T-cell (primary cell): ENCODE measurements at regions of chr15 and their contacts with region 1.

Region 1: GRCh38 chr15:82074608-82075007 is 28.8 kb upstream of the MEX3B start:
- DNase-seq: no peak
- ATAC-seq: no peak
- H3K4me3 ChIP-seq: no peak overlapping the region
- H3K4me3 Mint-ChIP-seq: no peak overlapping the region
- H3K27ac ChIP-seq: no peak overlapping the region
- H3K27ac Mint-ChIP-seq: no peak overlapping the region
- H3K4me1 ChIP-seq: no peaks in the 10 kb centered on the region
- H3K4me1 Mint-ChIP-seq: no peaks in the 10 kb centered on the region
- H3K27me3 ChIP-seq: peaks cover 0 to 30% of the 10 kb centered on the region in 2 experiments
- H3K27me3 Mint-ChIP-seq: peaks cover 17 to 23% of the 10 kb centered on the region in 2 donors

Region 2: GRCh38 chr15:81562986-81563385 is 511.6 kb before region 1 on chr15:
- CTCF ChIA-PET with region 1: no interaction called
- POLR2A ChIA-PET with region 1: no interaction called
- DNase-seq: no peak
- ATAC-seq: no peak
- H3K4me3 ChIP-seq: no peak overlapping the region
- H3K4me3 Mint-ChIP-seq: no peak overlapping the region
- H3K27ac ChIP-seq: no peak overlapping the region
- H3K27ac Mint-ChIP-seq: no peak overlapping the region
- H3K4me1 ChIP-seq: no peaks in the 10 kb centered on the region
- H3K4me1 Mint-ChIP-seq: no peaks in the 10 kb centered on the region
- H3K27me3 ChIP-seq: no peaks in the 10 kb centered on the region
- H3K27me3 Mint-ChIP-seq: peaks cover under 1 to 5% of the 10 kb centered on the region in 2 donors

Region 3: GRCh38 chr15:81843226-81843625 is 231.4 kb before region 1 on chr15:
- CTCF ChIA-PET with region 1: no interaction called
- POLR2A ChIA-PET with region 1: no interaction called
- DNase-seq: no peak
- ATAC-seq: no peak
- H3K4me3 ChIP-seq: no peak overlapping the region
- H3K4me3 Mint-ChIP-seq: no peak overlapping the region
- H3K27ac ChIP-seq: no peak overlapping the region
- H3K27ac Mint-ChIP-seq: no peak overlapping the region
- H3K4me1 ChIP-seq: no peaks in the 10 kb centered on the region
- H3K4me1 Mint-ChIP-seq: no peaks in the 10 kb centered on the region
- H3K27me3 ChIP-seq: no peaks in the 10 kb centered on the region
- H3K27me3 Mint-ChIP-seq: peaks cover 0 to 4% of the 10 kb centered on the region in 2 donors

Region 4: GRCh38 chr15:82122746-82123400 is 48.3 kb after region 1 on chr15:
- CTCF ChIA-PET with region 1: no interaction called
- POLR2A ChIA-PET with region 1: no interaction called
- DNase-seq: no peak
- ATAC-seq: no peak
- H3K4me3 ChIP-seq: no peak overlapping the region
- H3K4me3 Mint-ChIP-seq: no peak overlapping the region
- H3K27ac ChIP-seq: no peak overlapping the region
- H3K27ac Mint-ChIP-seq: no peak overlapping the region
- H3K4me1 ChIP-seq: no peaks in the 10 kb centered on the region
- H3K4me1 Mint-ChIP-seq: peaks cover 0 to 8% (median 0%) of the 10 kb centered on the region in 3 donors
- H3K27me3 ChIP-seq: no peaks in the 10 kb centered on the region
- H3K27me3 Mint-ChIP-seq: no peaks in the 10 kb centered on the region

Region 5: GRCh38 chr15:82146990-82147461 is 72.4 kb after region 1 on chr15:
- CTCF ChIA-PET with region 1: no interaction called
- POLR2A ChIA-PET with region 1: no interaction called
- DNase-seq: no peak
- ATAC-seq: no peak
- H3K4me3 ChIP-seq: no peak overlapping the region
- H3K4me3 Mint-ChIP-seq: no peak overlapping the region
- H3K27ac ChIP-seq: no peak overlapping the region
- H3K27ac Mint-ChIP-seq: no peak overlapping the region
- H3K4me1 ChIP-seq: no peaks in the 10 kb centered on the region
- H3K4me1 Mint-ChIP-seq: no peaks in the 10 kb centered on the region
- H3K27me3 ChIP-seq: no peaks in the 10 kb centered on the region
- H3K27me3 Mint-ChIP-seq: no peaks in the 10 kb centered on the region

Region 6: GRCh38 chr15:82903511-82903910 is 828.9 kb after region 1 on chr15:
- CTCF ChIA-PET with region 1: interaction called in 1 of 2 experiments, 10 read pairs
- POLR2A ChIA-PET with region 1: no interaction called
- DNase-seq: no peak
- ATAC-seq: no peak
- H3K4me3 ChIP-seq: no peak overlapping the region
- H3K4me3 Mint-ChIP-seq: no peak overlapping the region
- H3K27ac ChIP-seq: no peak overlapping the region
- H3K27ac Mint-ChIP-seq: no peak overlapping the region
- H3K4me1 ChIP-seq: no peaks in the 10 kb centered on the region
- H3K4me1 Mint-ChIP-seq: no peaks in the 10 kb centered on the region
- H3K27me3 ChIP-seq: peaks cover 0 to 7% of the 10 kb centered on the region in 2 experiments
- H3K27me3 Mint-ChIP-seq: peaks cover 4 to 10% of the 10 kb centered on the region in 2 donors